CD8-positive, alpha-beta T cell (primary cell): ENCODE measurements at regions of chr4 and their contacts with region 1.

Region 1: GRCh38 chr4:114577386-114577785 is 21.2 kb upstream of the UGT8 start:
- DNase-seq: no peak
- ATAC-seq: no peak
- H3K4me3 ChIP-seq: no peak overlapping the region
- H3K4me3 Mint-ChIP-seq: no peak overlapping the region
- H3K27ac ChIP-seq: no peak overlapping the region
- H3K27ac Mint-ChIP-seq: no peak overlapping the region
- H3K4me1 ChIP-seq: no peaks in the 10 kb centered on the region
- H3K4me1 Mint-ChIP-seq: no peaks in the 10 kb centered on the region
- H3K27me3 ChIP-seq: no peaks in the 10 kb centered on the region
- H3K27me3 Mint-ChIP-seq: no peaks in the 10 kb centered on the region
- CTCF ChIP-seq: no peak

Region 2: DNA sequence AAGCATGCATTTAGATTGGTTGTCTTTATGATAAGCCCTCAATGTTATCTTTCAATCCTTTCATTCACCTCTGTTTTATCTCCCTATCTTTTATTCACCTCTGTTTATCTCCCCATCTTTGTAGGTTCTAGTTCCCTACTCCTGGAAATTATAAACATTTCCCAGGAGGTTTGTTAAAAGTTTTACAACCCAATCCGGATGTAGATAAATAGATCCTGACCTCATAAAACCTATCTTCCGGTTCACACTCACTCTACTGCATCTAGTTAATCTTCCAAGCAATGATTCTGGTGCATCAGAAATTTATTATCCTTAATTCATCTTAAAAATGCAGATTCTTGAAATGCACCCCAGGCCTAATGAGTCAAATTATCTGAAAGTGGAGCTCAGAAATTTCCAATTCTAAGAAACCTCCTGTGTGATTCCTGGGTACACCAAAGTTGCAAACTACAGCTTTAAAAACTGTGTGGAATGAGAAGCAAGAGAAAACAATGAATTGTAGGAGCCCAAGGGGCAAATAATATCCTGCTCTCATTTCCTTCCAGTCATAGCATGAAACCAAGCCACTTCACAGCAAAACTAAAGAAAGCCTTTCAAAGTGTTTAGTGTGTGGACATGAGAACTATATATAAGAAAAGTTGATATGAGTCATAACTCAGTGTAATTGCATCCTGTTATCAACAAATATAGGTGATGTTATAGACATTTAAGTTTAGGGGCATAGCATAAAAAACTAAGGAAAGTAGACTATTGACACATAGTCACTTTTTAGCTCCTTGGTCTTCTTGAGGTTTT is 29.8 kb before region 1 on chr4:
- CTCF ChIA-PET with region 1: no interaction called
- POLR2A ChIA-PET with region 1: no interaction called
- intact Hi-C with region 1: loop called in 1 of 2 experiments (anchors 1 kb)
- DNase-seq: no peak
- ATAC-seq: no peak
- H3K4me3 ChIP-seq: no peak overlapping the region
- H3K4me3 Mint-ChIP-seq: no peak overlapping the region
- H3K27ac ChIP-seq: no peak overlapping the region
- H3K27ac Mint-ChIP-seq: no peak overlapping the region
- H3K4me1 ChIP-seq: no peaks in the 10 kb centered on the region
- H3K4me1 Mint-ChIP-seq: no peaks in the 10 kb centered on the region
- H3K27me3 ChIP-seq: no peaks in the 10 kb centered on the region
- H3K27me3 Mint-ChIP-seq: no peaks in the 10 kb centered on the region
- CTCF ChIP-seq: no peak